Activated CD4-positive, alpha-beta memory T cell treated with anti-CD3 and anti-CD28 coated beads for 36 hours (primary cell): ENCODE measurements at regions of chr3 and their contacts with region 1.

Region 1: DNA sequence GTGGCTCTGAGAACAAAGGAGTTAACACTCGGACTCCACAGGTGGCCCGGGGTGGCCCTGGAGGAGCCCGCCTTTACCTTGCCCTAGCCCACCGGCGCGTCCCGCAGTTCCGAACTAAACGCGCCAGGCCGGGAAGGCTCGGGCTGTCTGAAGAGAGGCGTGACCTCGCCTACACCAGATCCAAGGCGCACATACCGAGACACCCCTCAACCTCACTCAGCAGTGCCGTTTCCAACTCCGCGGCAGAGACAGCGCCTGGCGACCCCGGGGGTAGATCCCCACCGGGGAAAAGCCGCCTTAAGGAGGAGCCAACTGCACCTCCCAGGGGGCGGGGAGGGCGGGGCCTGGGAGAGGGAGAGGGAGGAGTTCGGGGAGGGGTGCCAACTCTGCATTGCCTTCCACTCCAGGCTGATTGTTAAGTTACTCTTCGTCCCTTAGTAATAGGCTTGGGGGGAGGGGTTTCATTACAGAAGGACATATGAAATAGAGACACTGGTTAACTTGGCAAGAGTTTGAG is at the start of gene DLG1:
- DNase-seq: peak; percentile 91
- H3K4me3 Mint-ChIP-seq: peak within 1 kb of the TSS; percentile 97
- H3K27ac Mint-ChIP-seq: peak within 1 kb of the TSS; percentile 89
- H3K4me1 Mint-ChIP-seq: peaks cover 23% of the 10 kb centered on the region
- H3K27me3 Mint-ChIP-seq: peaks cover 24% of the 10 kb centered on the region
- total RNA-seq, gene DLG1: 52.6 to 53.3 TPM

Region 2: DNA sequence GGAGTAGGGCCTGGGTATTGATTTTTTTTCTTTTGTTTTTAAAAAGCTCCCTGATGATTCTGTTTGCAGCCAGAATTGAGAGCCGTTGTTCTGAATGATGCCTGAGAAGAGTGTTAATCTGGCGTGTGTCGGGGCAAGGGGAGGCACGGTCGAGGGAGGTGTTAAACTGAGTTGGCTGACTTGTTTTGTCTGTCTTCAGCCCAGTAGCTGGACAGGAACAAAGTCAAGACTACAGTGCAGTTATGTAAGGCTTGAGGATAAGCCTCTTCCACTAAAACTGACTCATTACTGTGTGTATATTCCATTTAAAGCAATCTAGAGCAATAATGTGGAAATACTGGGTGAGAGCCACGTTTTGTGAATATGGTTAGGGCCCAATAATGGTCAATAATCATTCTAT is 119.0 kb after region 1 on chr3:
- CTCF ChIA-PET with region 1: no interaction called
- POLR2A ChIA-PET with region 1: no interaction called
- intact Hi-C with region 1: no loop called
- DNase-seq: no peak
- H3K4me3 Mint-ChIP-seq: no peak overlapping the region
- H3K27ac Mint-ChIP-seq: no peak overlapping the region
- H3K4me1 Mint-ChIP-seq: peaks cover 3% of the 10 kb centered on the region
- H3K27me3 Mint-ChIP-seq: peaks cover 7% of the 10 kb centered on the region

Region 3: GRCh38 chr3:197454014-197454413 is 155.6 kb after region 1 on chr3:
- CTCF ChIA-PET with region 1: no interaction called
- POLR2A ChIA-PET with region 1: interaction called, 4 read pairs
- intact Hi-C with region 1: loop called (anchors 5 kb)
- DNase-seq: peak; percentile 20
- H3K4me3 Mint-ChIP-seq: no peak overlapping the region
- H3K27ac Mint-ChIP-seq: no peak overlapping the region
- H3K4me1 Mint-ChIP-seq: peaks cover 12% of the 10 kb centered on the region
- H3K27me3 Mint-ChIP-seq: peaks cover 3% of the 10 kb centered on the region

Region 4: DNA sequence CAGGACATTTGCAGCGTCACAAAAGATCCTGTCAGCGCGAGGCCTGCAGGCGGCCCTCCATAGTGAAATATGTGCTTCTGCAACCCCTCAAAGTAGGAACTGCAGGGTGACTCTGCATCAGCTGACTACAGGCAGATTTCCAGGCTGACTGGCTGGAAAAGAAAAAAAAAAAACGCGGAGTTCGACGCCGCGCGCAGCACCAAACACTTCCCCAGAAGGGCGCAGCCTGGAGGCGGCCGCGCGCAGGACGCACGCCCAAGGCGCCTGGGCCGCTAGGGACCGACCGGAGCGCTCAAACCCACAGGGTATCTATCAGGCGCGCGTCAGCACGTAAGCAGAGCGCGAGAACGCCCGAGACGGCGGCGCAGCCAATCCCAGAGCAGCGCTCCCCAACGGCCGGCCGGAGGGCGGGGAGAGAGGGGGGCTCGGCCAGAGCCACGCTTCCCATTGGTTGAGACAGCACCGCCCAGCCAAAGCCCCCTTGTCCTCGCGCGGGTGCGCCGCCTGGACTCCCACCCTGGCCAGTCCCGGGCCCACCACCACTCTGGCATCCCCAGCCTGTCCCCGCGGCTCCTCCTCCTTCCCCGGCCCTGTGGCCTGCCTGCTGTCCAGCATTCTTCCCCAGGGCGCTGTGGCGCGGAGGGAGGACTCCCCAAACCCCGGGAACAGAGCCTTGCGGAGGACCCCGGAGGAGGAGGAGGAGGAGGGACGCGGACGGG is 256.3 kb after region 1 on chr3:
- CTCF ChIA-PET with region 1: no interaction called
- POLR2A ChIA-PET with region 1: no interaction called
- intact Hi-C with region 1: loop called (anchors 2 kb)
- DNase-seq: peak; percentile 97
- H3K4me3 Mint-ChIP-seq: peak overlapping the region; percentile 89
- H3K27ac Mint-ChIP-seq: peak overlapping the region; percentile 92
- H3K4me1 Mint-ChIP-seq: peaks cover 12% of the 10 kb centered on the region
- H3K27me3 Mint-ChIP-seq: no peaks in the 10 kb centered on the region